H1 (cell line): ENCODE measurements at regions of chr1 and their contacts with region 1.

Region 1: GRCh38 chr1:3483801-3484444 is 29.5 kb downstream of the ARHGEF16 start:
- DNase-seq: peak; percentile 44 to 97
- H3K4me3 ChIP-seq: no peak overlapping the region
- H3K27ac ChIP-seq: no peak overlapping the region
- H3K4me1 ChIP-seq: no peaks in the 10 kb centered on the region
- H3K27me3 ChIP-seq: no peaks in the 10 kb centered on the region
- CTCF ChIP-seq: peak in 2 of 3 experiments; percentile 81 to 95; a peak in 3 of 4 replicates
- EP300 ChIP-seq: no peak
- POLR2A ChIP-seq: no peak; a peak in 1 of 3 replicates
- RAD21 ChIP-seq: peak; percentile 70 to 81

Region 2: DNA sequence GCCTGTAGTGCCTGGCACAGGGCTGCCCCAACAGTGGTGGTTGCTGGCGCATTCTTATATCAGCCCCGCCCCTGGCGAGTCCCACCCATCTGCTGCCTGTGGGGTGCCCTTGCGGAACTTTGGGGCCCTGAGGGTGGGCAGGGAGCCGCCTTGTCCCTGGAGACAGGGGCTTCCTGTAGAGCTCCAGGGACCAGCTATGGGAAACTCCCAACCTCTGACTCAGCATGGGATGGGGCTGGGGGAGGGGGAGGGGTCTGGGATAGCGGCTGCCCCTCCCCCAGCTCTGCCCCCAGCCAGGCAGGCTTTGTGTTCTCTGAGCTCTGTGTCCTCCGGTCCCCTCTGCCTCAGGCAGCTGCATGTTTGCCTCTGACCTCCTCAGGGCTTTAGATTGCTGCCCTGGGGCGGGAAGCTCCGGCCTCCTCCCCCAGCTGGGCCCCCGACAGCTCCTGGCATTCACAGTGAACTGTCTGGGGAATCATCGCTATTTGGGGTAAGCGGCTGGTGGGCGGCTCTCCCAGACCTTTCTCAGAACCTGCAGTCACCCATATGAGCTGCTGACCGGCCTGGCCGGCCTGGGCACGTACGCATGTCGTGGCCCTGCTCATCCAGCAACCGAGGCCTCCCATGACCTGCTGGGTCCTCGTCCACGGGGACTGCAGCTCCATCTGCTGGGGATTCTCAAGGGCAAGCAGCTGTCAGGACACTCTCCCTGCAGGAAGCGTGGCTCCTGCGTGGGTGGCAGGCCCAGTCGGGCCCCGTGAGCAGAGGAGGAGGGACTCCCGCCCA is 12.4 kb before region 1 on chr1:
- CTCF ChIA-PET with region 1: interaction called, 24 read pairs
- POLR2A ChIA-PET with region 1: interaction called, 7 read pairs
- DNase-seq: peak; percentile 73 to 74
- H3K4me3 ChIP-seq: 0 out of 8 replicates have a peak overlapping the region, but pooled peaks of 1 of the 4 experiments have one; percentile 11
- H3K27ac ChIP-seq: peak overlapping the region; percentile 75
- H3K4me1 ChIP-seq: peaks cover 0 to 22% (median 16%) of the 10 kb centered on the region in 4 experiments; a peak in 6 of 7 replicates
- H3K27me3 ChIP-seq: no peaks in the 10 kb centered on the region
- CTCF ChIP-seq: peak in 2 of 3 experiments; percentile 47 to 61; a peak in 3 of 4 replicates
- EP300 ChIP-seq: peak in 1 of 2 experiments; percentile 52; a peak in 1 of 3 replicates
- POLR2A ChIP-seq: no peak
- RAD21 ChIP-seq: peak; percentile 44 to 59